AG04450 (cell line): ENCODE measurements at regions of chr9 and their contacts with region 1.

Region 1: GRCh38 chr9:129504404-129504803 is 116.5 kb downstream of the C9orf50 start:
- DNase-seq: no peak
- H3K4me3 ChIP-seq: no peak overlapping the region
- H3K27ac ChIP-seq: no peak overlapping the region
- H3K27me3 ChIP-seq: no peaks in the 10 kb centered on the region
- CTCF ChIP-seq: no peak

Region 2: DNA sequence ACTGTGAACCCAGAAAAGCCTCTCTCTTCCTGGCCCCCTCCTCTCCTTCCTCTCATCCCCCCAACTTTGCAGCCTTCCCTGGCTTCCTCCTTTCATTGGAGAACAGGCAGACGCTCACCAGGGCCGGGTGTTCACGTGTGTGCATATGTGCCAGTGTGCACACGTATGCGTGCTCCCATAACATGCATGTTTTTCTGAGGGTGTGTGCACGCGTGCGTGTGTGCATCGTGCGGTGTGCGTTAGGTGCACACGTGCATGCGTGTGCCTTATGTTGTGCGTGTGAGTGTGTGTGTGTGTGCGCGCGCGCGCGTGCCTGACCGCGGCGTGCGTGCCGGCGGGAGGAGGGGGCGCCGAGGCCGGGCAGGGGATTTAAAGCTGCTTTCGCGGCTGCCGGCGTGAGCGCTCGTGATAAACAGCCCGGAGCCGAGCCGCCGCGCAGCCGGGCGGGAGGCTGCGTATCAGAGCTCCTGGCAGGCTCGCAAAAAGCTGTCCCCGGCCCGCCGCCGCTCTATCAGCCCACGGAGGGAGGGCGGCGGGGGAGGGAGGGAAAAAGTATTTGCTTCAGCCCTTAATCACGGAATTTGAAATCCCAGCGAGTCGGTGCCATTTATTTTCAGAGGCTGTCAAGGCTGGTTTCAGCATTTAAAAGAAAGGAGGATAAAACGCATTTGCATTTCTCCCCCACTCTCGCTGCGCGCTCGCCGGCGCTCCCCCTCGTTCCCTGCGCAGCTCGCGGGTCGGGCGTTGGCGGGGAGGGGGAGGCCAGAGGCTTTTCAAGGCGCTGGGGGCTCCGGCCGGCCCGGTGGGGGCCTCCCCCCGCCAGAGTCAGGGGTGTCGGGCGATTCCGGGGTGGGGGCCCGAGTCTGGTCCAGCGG is 67.4 kb before region 1 on chr9:
- CTCF ChIA-PET with region 1: no interaction called
- POLR2A ChIA-PET with region 1: interaction called, 10 read pairs
- DNase-seq: no peak
- H3K4me3 ChIP-seq: peak overlapping the region; percentile 59
- H3K27ac ChIP-seq: peak overlapping the region; percentile 31
- H3K27me3 ChIP-seq: no peaks in the 10 kb centered on the region
- CTCF ChIP-seq: no peak